Activated CD4-positive, alpha-beta T cell treated with anti-CD3 and anti-CD28 coated beads, Interleukin-2, amount 10 ng/mL, durations not matched to agents 24 days and 14 days (primary cell): ENCODE measurements at regions of chr2 and their contacts with region 1.

Region 1: GRCh38 chr2:61426267-61426897 is 44.5 kb downstream of the USP34 start:
- DNase-seq: peak; percentile 89
- H3K4me3 Mint-ChIP-seq: no peak overlapping the region
- H3K27ac Mint-ChIP-seq: peak overlapping the region; percentile 69
- H3K4me1 Mint-ChIP-seq: peaks cover 40% of the 10 kb centered on the region
- H3K27me3 Mint-ChIP-seq: no peaks in the 10 kb centered on the region

Region 2: DNA sequence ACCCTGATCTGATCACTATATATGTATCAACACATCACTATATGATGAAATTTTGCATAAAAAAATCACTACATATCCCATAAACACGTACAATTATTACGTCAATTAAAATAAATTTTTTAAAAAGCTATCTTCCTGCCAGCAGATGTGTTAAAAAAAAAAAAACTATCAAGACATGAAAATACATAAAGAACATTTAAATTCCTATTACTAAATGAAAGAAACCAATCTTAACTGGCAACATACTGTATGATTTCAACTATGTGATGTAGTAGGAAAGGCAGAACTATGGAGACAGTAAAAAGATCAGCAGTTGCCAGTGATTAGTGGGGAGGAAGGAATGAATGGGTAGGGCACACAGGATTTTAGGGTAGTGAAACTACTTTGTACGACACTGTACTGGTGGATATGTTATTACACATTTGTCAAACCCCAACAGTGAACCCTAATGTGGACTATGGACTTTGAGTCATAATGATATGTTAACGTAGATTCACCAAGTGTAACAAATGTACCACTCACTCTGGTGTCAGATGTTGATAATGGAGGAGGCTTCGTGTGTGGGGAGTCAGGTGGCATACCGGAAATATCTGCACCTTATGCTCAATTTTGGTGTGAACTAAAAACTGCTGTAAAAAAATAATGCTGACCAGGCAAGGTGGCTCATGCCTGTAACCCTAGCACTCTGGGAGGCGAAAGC is 17.1 kb after region 1 on chr2:
- intact Hi-C with region 1: no loop called
- DNase-seq: no peak
- H3K4me3 Mint-ChIP-seq: no peak overlapping the region
- H3K27ac Mint-ChIP-seq: no peak overlapping the region
- H3K4me1 Mint-ChIP-seq: peaks cover 24% of the 10 kb centered on the region
- H3K27me3 Mint-ChIP-seq: no peaks in the 10 kb centered on the region

Region 3: DNA sequence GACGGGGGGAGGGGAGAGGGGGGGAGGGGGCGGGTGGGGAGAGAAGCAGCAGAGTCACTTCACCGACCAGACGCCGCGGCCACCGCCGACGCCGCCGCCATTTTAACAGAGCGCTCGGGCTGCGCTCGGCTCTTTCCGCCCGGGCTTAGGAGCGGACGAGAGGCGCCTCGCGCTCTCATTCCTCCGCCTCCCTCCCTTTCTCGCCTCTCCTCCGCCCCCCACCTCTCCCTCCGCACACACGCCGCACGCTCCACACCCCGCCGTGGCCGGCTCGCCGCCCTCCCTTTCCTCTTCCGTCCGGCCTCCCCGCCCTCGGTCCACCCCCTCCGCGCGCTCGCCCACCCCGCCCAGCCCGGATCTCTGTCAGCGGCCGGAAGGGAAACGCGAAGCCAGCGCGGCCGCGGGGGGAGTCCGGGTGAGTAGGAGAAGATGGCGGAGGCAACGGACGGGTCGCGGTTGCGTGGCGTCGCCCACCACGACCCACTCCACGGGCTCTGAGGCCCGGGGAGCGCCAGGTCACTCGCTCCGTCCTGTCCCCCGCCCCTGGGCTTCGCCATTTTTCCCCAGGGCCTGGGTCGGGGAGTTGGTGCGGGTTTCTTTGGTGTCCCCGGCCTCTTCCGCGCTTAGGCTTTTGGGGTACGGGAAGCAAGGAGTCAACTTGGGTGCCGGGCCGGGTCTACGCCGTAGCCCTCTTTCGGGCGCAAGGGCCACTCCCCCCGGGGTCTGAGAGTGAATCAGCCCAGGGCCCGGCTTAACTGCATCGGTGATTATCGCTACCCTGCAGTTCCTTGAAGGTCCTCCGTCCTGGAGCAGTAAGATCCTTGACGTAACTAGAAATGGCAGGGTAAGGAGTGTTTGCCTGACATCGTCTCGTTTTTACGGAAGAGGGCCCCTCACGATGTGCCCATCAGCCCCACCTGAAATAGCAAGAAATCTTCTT is 44.9 kb after region 1 on chr2 and contains the start of gene USP34:
- intact Hi-C with region 1: loop called (anchors 1 kb)
- DNase-seq: peak; percentile 96
- H3K4me3 Mint-ChIP-seq: peak within 1 kb of the TSS; percentile 98
- H3K27ac Mint-ChIP-seq: peak within 1 kb of the TSS; percentile 98
- H3K4me1 Mint-ChIP-seq: peaks cover 19% of the 10 kb centered on the region
- H3K27me3 Mint-ChIP-seq: no peaks in the 10 kb centered on the region
- total RNA-seq, gene USP34: 84.3 and 93.8 TPM in 2 replicates

Region 4: DNA sequence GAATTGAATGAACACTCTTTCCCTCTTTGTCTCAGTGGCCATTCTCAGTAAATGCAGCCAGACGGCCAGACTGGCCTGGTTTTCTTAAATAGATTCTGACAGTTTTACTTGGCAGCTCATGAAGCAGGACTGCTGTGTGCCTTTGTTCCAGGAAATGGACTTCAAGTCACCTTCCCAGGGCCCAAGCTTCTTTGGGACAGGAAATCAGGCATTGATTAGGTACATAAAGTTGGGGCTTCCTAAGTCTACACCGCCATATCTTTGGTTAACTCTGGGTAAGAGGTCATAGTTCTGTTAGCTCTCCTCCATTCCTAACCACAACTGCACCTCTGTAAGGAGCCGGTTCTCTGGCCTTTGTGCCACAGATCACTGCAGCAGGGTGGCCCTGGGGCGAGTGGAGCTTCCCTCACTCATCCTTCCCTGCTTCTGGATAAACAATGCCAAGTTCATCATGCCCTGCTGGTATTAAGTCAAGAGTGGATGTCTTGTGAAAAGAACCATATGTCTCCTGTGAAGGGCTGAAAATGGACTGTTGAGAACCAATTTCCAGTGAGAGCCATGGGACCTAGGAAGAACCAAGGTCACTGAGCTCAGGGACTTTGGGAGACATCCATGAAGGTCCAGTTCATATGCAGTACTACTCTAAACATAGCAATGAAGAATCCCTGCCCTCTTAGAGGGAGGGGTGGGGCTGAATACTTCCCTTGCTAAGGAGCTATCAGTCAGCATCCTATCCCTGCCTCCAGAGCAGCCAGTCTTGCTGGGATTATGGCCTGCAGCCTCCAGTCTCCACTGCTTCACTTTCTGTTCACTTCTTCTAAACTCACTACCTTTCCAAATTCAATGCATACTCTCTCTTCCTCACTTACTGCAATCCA is 234.4 kb after region 1 on chr2:
- intact Hi-C with region 1: loop called (anchors 10 kb)
- DNase-seq: no peak
- H3K4me3 Mint-ChIP-seq: no peak overlapping the region
- H3K27ac Mint-ChIP-seq: no peak overlapping the region
- H3K4me1 Mint-ChIP-seq: peaks cover 9% of the 10 kb centered on the region
- H3K27me3 Mint-ChIP-seq: peaks cover 3% of the 10 kb centered on the region

Region 5: DNA sequence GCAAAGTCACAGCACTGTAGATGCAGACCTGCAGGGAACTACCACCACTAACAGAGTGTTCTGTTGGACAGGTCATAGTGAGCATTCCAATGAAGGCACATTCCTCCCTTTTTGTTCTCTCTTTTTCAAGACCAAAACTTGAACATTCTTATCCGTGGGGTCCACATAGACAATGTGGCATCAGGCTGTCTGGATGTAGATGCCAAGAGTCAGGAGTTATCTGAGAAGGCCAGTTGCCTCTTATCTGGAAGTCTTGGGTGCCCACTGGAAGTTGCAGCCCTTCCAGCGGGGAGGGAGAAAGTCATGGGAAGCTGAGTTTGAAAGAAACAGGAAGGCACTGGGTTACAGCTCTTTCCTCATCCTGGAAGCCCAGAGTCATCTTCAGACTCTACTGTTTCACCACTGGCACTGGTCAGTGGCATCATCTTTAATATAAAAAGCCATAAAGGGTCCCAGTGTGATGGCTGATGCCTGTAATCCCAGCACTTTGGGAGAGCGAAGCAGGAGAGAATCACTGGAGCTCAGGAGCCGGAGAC is 366.0 kb after region 1 on chr2:
- intact Hi-C with region 1: loop called (anchors 2 kb)
- DNase-seq: no peak
- H3K4me3 Mint-ChIP-seq: no peak overlapping the region
- H3K27ac Mint-ChIP-seq: no peak overlapping the region
- H3K4me1 Mint-ChIP-seq: peaks cover 5% of the 10 kb centered on the region
- H3K27me3 Mint-ChIP-seq: peaks cover 8% of the 10 kb centered on the region